Activated T-helper 2 cell treated with anti-CD3 and anti-CD28 coated beads, Interferon-gamma antibody, Interleukin-2, Interleukin-4, amounts not matched to agents 10 μg/mL and 5 μg/mL and 100 μg/mL, durations not matched to agents 14 hours and 24 hours and 36 hours (primary cell): ENCODE measurements at regions of chr2 and their contacts with region 1.

Region 1: DNA sequence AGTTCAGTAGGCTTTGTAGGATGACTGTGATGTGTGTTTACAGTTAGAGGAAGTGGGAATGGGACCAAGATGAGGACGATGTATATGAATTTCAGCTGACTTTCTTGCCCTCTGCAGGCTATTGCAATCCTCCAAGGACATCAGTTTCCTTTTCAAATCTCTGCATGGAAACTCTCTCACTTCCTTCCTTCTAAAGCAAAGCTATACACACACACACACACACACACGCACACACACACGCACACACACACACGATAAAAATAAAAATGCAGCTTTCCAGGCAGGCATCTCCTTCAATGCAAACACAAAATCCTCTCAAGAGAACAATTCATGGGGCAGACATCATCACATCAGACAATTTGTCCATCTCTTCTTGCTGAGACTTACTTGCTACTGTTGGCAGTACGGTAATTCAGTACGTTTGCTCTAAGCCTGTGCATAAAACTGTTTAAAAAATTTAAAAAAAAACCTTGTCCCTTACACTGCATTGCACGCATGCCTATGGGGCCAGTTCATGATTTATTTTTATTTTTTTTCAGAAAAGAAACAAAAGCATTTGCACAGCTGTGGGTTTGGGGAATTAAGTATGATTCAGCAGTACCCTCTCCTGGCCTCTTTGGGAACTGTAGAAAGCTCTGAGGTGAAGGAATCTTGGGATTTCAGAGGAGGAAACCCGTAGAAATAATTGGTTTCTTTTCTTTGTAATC is 27.1 kb upstream of the ICOS start:
- DNase-seq: no peak
- H3K4me3 Mint-ChIP-seq: no peak overlapping the region
- H3K27ac Mint-ChIP-seq: peak overlapping the region; percentile 35
- H3K4me1 Mint-ChIP-seq: peaks cover 21% of the 10 kb centered on the region
- H3K27me3 Mint-ChIP-seq: peaks cover 2% of the 10 kb centered on the region

Region 2: GRCh38 chr2:203484266-203485112 is 424.9 kb before region 1 on chr2:
- intact Hi-C with region 1: loop called (anchors 5 kb)
- DNase-seq: peak; percentile 33
- H3K4me3 Mint-ChIP-seq: no peak overlapping the region
- H3K27ac Mint-ChIP-seq: no peak overlapping the region
- H3K4me1 Mint-ChIP-seq: peaks cover 6% of the 10 kb centered on the region
- H3K27me3 Mint-ChIP-seq: no peaks in the 10 kb centered on the region

Region 3: DNA sequence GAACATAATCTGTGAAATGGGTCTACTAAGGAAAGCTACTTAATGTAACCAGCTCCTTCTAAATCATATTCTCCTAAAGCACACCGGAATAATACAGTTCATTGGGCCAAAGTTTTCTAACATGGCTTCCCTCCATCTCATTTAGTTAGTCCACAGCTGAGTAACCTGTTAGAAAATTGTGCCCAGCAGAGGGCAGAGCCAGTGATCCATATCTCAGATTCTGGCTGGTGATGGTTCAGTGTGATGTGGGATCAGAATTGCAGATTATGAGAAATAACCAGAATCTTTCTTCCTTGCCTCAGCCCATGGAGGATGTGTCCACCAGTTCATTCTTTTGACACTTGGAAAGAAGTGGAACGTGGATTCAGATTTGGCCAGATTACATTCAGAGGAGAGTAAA is 51.2 kb before region 1 on chr2:
- intact Hi-C with region 1: loop called (anchors 2 kb)
- DNase-seq: no peak
- H3K4me3 Mint-ChIP-seq: no peak overlapping the region
- H3K27ac Mint-ChIP-seq: peak overlapping the region; percentile 67
- H3K4me1 Mint-ChIP-seq: peaks cover 83% of the 10 kb centered on the region
- H3K27me3 Mint-ChIP-seq: no peaks in the 10 kb centered on the region

Region 4: GRCh38 chr2:203871371-203871983 is 37.9 kb before region 1 on chr2:
- intact Hi-C with region 1: loop called (anchors 1 kb)
- DNase-seq: peak; percentile 60
- H3K4me3 Mint-ChIP-seq: peak overlapping the region; percentile 96
- H3K27ac Mint-ChIP-seq: peak overlapping the region; percentile 95
- H3K4me1 Mint-ChIP-seq: peaks cover 57% of the 10 kb centered on the region
- H3K27me3 Mint-ChIP-seq: no peaks in the 10 kb centered on the region

Region 5: DNA sequence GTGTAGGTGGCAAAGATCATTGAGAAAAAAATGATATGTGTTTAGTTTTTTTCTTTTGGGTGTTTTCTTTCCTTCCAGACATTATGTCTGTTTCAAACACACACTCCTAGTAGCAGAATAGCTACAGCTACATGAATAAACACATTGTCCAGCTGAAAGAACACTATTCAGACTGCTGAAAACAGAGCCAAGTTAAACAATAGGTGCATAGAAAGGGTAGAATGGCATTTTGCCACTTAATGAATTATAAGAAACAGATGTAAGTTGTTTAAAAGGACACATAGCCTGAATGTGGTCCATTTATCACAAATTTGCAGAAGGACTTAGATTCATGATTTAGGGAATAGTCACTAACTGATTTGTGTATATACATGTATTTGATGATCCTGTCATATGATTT is 21.7 kb before region 1 on chr2:
- intact Hi-C with region 1: loop called (anchors 1 kb)
- DNase-seq: no peak
- H3K4me3 Mint-ChIP-seq: no peak overlapping the region
- H3K27ac Mint-ChIP-seq: peak overlapping the region; percentile 54
- H3K4me1 Mint-ChIP-seq: peaks cover 67% of the 10 kb centered on the region
- H3K27me3 Mint-ChIP-seq: no peaks in the 10 kb centered on the region

Region 6: DNA sequence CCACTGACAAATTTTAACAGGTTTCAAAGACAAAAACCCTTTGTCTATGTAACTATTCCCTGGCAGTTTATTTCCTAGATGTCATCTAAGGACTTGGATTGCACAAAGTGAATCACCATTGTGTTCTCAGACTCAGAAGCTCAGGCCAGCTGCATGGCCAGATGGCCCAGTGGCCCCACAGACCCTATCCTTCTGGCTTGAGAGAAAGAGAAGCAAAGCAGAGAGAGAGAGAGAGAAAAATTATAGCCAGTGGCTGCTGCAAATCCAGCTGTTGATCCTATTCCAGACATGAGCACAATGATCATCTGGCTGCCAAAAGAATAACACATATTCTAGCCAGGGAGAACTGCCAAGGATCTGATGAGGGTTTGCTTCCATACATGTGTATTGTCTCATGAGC is 16.0 kb before region 1 on chr2:
- intact Hi-C with region 1: loop called (anchors 1 kb)
- DNase-seq: no peak
- H3K4me3 Mint-ChIP-seq: no peak overlapping the region
- H3K27ac Mint-ChIP-seq: peak overlapping the region; percentile 92
- H3K4me1 Mint-ChIP-seq: peaks cover 79% of the 10 kb centered on the region
- H3K27me3 Mint-ChIP-seq: no peaks in the 10 kb centered on the region

Region 7: GRCh38 chr2:203898657-203899056 is 10.8 kb before region 1 on chr2:
- intact Hi-C with region 1: loop called (anchors 1 kb)
- DNase-seq: no peak
- H3K4me3 Mint-ChIP-seq: no peak overlapping the region
- H3K27ac Mint-ChIP-seq: no peak overlapping the region
- H3K4me1 Mint-ChIP-seq: peaks cover 57% of the 10 kb centered on the region
- H3K27me3 Mint-ChIP-seq: no peaks in the 10 kb centered on the region

Region 8: DNA sequence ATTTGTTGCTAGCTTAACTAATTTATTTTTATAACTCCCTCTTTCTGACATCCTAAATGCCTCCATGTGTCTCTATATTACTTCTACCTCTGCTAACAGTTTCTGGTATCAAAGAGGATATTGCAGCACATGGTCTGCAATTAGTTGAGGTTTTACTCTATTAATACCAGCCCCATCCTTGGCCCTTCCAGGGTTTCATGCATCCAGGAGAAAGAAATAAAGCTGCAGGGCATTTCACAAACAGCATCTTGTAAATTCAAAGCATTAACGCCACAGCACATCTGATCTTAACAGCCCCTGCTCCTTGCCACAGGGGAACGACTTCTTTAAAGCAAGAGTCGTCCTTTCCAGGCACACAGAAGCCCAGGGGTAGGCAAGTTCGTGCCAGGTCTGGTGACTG is 286.1 kb after region 1 on chr2:
- intact Hi-C with region 1: no loop called
- DNase-seq: no peak
- H3K4me3 Mint-ChIP-seq: no peak overlapping the region
- H3K27ac Mint-ChIP-seq: no peak overlapping the region
- H3K4me1 Mint-ChIP-seq: no peaks in the 10 kb centered on the region
- H3K27me3 Mint-ChIP-seq: peaks cover 40% of the 10 kb centered on the region

Region 9: GRCh38 chr2:204205538-204205937 is 296.1 kb after region 1 on chr2:
- intact Hi-C with region 1: no loop called
- DNase-seq: no peak
- H3K4me3 Mint-ChIP-seq: no peak overlapping the region
- H3K27ac Mint-ChIP-seq: no peak overlapping the region
- H3K4me1 Mint-ChIP-seq: no peaks in the 10 kb centered on the region
- H3K27me3 Mint-ChIP-seq: peaks cover 46% of the 10 kb centered on the region